ENCODE measurements at regions of chr14 and their contacts with region 1.

Region 1: DNA sequence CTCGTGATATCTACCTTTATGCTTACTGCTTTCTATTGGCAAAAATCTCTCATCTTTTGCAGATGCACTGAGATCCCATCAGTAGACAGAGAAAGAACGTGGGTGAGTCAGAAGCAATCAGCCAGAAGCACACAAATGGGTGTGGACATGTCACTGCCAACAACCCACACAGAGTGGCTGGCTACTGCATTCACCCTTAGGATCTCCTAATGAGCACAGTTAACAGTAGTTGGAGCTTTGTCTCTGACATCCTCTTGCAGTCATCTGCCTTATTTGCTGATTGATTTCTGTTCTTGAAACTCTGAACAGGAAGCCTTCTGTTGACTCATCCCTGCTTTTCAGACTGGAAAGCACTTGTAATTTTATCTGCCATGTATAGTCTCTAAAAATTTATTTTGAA is 117.2 kb downstream of the RGS6 start:
- DNase-seq: peak; percentile 11
- H3K4me3 Mint-ChIP-seq: peak overlapping the region; percentile 6
- H3K27ac Mint-ChIP-seq: peak overlapping the region; percentile 78
- H3K4me1 Mint-ChIP-seq: peaks cover 18% of the 10 kb centered on the region
- H3K27me3 Mint-ChIP-seq: peaks cover 5% of the 10 kb centered on the region

Region 2: DNA sequence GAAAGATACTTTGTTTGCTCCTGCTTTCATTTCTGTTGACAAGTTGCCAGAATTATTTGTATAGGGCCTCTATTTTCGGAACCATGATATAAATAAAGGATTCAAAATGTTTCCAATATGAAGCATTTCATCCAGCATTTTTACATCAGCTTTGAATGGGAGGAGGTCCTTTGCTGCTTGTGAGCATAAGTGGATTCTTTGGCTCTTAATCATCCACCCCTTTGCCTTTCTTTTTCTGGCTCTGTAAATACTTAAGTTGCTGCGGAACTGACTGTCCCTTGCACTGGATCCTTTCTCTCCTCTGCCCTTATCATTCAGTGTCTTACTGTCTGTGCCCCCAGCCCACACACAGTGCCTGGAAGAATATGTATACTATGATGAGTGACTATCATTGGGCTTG is 474.5 kb before region 1 on chr14:
- intact Hi-C with region 1: no loop called
- DNase-seq: no peak
- H3K4me3 Mint-ChIP-seq: no peak overlapping the region
- H3K27ac Mint-ChIP-seq: no peak overlapping the region
- H3K4me1 Mint-ChIP-seq: peaks cover 13% of the 10 kb centered on the region
- H3K27me3 Mint-ChIP-seq: no peaks in the 10 kb centered on the region

Region 3: DNA sequence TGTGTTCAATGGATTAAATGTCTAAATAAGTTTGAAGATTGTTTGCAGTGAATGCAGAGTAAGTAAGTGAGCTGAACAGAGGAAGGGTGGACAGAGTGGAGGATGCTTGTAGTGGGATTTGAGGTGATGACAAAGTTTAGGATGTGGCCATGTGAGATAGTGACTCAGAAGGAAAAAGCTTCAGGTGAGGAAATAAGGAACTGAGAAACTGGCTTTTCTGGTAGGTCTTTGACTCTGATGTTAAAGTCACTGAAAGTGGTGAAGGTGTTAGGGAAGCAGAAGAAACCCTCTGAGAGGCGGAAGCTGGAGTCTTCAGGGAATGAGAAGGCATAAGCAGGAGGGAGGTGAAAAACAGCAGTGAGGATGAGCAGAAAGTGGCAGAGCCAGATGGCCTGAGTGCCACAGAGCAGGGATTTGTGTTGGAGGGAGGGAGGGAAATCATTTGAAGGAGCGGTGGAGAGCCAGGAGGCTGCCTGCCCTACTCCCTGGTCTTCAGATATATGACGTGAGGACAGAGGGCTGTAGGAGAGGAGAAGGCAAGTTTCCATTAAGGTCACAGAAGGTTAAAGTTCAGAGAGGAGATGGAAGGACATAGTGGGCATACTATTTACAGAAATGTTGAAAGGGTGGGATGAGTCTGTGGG is 92.4 kb before region 1 on chr14:
- intact Hi-C with region 1: no loop called
- DNase-seq: no peak
- H3K4me3 Mint-ChIP-seq: no peak overlapping the region
- H3K27ac Mint-ChIP-seq: no peak overlapping the region
- H3K4me1 Mint-ChIP-seq: peaks cover 5% of the 10 kb centered on the region
- H3K27me3 Mint-ChIP-seq: peaks cover 9% of the 10 kb centered on the region

Region 4: DNA sequence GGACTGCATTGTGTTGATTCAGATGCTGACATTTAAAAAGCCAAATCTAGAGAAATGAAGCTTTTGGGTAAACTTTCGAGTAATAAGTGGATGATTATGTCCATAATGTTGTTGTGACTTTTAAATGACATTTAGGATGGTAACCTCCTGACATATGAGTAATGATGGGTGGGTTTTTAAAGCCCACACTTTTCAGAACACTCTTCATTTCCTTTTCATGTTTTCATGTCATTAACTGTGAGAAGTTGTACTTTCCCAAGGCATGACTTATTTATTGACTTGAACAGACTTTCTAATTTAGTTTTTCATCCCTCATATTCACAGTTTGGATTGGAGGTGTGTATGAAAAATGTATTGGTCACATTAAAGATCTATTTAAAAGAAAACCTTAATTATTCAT is 81.8 kb before region 1 on chr14:
- intact Hi-C with region 1: loop called (anchors 1 kb)
- DNase-seq: no peak
- H3K4me3 Mint-ChIP-seq: peak overlapping the region; percentile 34
- H3K27ac Mint-ChIP-seq: peak overlapping the region; percentile 75
- H3K4me1 Mint-ChIP-seq: peaks cover 8% of the 10 kb centered on the region
- H3K27me3 Mint-ChIP-seq: no peaks in the 10 kb centered on the region

Region 5: GRCh38 chr14:72023722-72024407 is 25.6 kb before region 1 on chr14:
- intact Hi-C with region 1: loop called (anchors 1 kb)
- DNase-seq: peak; percentile 38
- H3K4me3 Mint-ChIP-seq: peak overlapping the region; percentile 28
- H3K27ac Mint-ChIP-seq: no peak overlapping the region
- H3K4me1 Mint-ChIP-seq: peaks cover 13% of the 10 kb centered on the region
- H3K27me3 Mint-ChIP-seq: peaks cover 17% of the 10 kb centered on the region

Region 6: GRCh38 chr14:72084935-72085334 is 35.5 kb after region 1 on chr14:
- intact Hi-C with region 1: no loop called
- DNase-seq: no peak
- H3K4me3 Mint-ChIP-seq: no peak overlapping the region
- H3K27ac Mint-ChIP-seq: no peak overlapping the region
- H3K4me1 Mint-ChIP-seq: no peaks in the 10 kb centered on the region
- H3K27me3 Mint-ChIP-seq: peaks cover 17% of the 10 kb centered on the region

Region 7: GRCh38 chr14:72094844-72095582 is 45.6 kb after region 1 on chr14:
- intact Hi-C with region 1: loop called (anchors 2 kb)
- DNase-seq: no peak
- H3K4me3 Mint-ChIP-seq: no peak overlapping the region
- H3K27ac Mint-ChIP-seq: no peak overlapping the region
- H3K4me1 Mint-ChIP-seq: peaks cover 11% of the 10 kb centered on the region
- H3K27me3 Mint-ChIP-seq: peaks cover 5% of the 10 kb centered on the region

Region 8: DNA sequence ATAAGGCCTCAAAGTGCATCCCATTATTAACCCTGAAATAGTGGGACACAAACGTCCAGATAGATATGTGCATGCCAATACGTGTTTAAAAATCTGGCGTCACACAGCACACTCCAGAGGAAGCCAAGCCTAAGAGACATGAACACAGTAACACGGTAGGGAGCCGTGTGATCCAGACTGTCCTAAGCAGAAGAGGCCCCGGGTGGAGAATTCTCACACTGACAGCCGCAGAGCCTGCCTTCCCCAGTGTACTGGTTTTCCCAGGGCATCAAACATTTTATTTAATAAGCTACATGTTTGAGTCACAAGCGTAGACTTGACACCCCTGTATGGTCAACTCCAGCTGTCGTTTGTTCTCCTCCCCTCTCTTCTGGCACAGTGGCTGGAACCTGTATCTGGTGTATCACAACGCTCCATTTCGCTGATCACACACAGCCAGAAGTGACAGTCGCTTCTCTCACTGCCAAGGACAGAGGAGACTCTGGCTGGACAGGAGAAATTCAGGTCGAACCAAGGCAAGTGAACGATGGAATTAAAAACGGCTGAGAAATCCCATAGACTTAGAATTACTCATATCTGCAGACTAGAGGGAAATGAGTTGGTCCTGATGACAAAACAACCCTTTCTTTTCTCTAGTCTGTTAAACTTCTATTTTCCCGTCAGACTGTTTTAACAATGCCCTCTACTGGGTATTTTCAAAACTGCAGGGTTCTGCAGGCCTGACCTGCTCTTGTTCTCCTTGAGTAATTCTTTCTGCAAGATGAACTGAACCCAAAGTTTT is 242.6 kb after region 1 on chr14:
- intact Hi-C with region 1: loop called (anchors 1 kb)
- DNase-seq: no peak
- H3K4me3 Mint-ChIP-seq: no peak overlapping the region
- H3K27ac Mint-ChIP-seq: no peak overlapping the region
- H3K4me1 Mint-ChIP-seq: no peaks in the 10 kb centered on the region
- H3K27me3 Mint-ChIP-seq: peaks cover 8% of the 10 kb centered on the region

Region 9: DNA sequence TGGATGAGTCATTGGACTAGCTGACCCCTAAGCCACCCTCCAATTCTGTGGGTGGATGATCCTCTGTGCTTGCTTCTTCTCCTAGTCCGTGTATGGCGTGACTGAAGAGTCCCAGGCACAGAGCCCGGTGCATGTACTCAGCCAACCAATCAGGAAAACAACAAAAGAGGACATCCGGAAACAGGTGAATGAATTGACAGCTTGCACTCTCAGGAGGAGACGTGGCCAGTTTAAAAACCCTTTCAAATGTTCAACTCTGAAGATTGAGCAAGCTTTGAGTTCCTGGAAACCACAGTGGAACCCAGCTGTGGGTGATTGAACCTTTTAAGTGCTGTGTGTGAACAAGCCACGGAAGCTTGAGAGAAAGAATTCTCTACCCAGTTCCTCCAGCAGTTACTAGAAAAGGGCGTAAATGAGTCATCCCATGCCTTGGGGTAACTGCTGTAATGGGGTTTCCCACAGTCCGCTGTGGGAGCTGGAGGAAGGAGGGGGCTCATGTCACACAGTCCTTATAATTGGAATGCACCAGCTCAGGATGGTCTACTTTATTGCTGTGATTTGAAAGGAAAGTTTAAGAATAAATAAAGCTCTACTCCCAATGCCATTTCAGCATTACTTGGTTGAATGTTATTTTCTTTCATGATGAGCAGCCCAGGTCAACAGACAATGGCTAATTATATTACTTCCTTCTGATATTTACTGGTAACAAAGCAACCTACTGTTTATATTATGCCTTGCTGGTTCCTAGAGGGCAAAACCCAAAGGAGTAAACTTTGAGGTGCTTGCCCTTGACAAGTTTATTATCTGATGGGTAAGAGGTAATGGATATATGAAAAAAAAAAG is 427.4 kb after region 1 on chr14:
- intact Hi-C with region 1: loop called (anchors 1 kb)
- DNase-seq: peak; percentile 81
- H3K4me3 Mint-ChIP-seq: peak overlapping the region; percentile 53
- H3K27ac Mint-ChIP-seq: peak overlapping the region; percentile 87
- H3K4me1 Mint-ChIP-seq: peaks cover 80% of the 10 kb centered on the region
- H3K27me3 Mint-ChIP-seq: no peaks in the 10 kb centered on the region

Region 10: DNA sequence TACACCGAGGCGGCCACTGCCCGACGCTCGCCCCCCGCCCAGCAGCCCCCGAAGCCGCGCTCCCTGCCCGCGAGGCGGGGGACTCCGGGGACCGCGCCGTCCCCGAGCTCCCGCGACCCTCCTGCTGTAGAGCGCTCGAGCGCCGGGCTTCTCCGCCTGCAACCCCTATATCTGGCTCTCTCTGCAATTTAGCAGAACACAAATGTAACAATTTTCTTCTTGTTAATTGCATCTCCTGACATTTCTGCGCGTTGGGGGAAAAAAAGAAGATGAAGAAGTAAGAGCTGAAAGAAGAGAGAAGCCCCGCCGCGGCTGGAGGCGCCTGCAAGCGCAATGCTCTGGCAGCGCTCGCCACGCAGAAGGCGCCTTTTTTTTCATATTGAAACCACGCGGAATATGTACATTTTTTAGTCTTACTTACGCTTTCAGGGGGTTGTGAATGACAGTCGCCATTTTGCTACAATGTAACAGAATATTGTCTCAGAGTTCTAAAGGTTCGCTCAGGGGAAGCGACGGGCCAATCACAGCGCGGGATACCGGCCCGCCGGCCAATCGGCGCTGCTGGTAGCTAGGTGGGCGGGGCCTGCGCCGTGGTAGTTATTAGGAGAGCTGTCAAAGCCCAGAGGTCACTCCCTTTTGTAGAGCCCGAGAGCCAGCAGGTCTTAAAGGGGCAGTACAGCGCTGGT is 844.3 kb after region 1 on chr14 and contains the start of gene DPF3:
- intact Hi-C with region 1: loop called (anchors 5 kb)
- DNase-seq: peak; percentile 93
- H3K4me3 Mint-ChIP-seq: peak within 1 kb of the TSS; percentile 95
- H3K27ac Mint-ChIP-seq: peak within 1 kb of the TSS; percentile 86
- H3K4me1 Mint-ChIP-seq: peaks cover 29% of the 10 kb centered on the region
- H3K27me3 Mint-ChIP-seq: peaks cover 51% of the 10 kb centered on the region
- total RNA-seq, gene DPF3: 2.8 and 4.3 TPM in 2 replicates

Region 11: DNA sequence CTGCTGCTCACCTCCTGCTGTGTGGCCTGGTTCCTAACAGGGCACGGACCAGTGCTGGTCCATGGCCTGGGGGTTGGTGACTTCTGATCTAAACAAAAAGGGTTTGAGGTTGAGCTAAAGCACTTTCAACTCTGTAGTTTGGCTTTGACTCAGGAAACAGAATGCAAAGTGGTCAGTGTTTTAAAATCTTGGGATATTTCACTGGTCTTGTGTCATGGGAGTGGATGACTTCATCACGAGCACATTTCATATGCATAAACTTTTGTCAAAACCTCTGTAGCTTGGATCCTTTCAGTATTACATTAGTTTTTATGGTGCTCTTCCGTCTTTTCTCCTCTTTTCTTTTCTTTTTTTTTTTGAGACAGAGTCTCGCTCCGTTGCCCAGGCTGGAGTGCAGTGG is 1874.9 kb after region 1 on chr14:
- intact Hi-C with region 1: no loop called
- DNase-seq: no peak
- H3K4me3 Mint-ChIP-seq: no peak overlapping the region
- H3K27ac Mint-ChIP-seq: no peak overlapping the region
- H3K4me1 Mint-ChIP-seq: no peaks in the 10 kb centered on the region
- H3K27me3 Mint-ChIP-seq: no peaks in the 10 kb centered on the region

Measured in activated T-helper 1 cell treated with anti-CD3 and anti-CD28 coated beads, Interleukin-12 subunit alpha, Interleukin-12 subunit beta, Interleukin-2, Interleukin-4 antibody, amounts not matched to agents 30 ng/mL and 10 ng/mL and 1 ng/mL, durations not matched to agents 14 hours and 24 hours and 36 hours (primary cell).